Activated naive CD4-positive, alpha-beta T cell treated with anti-CD3 and anti-CD28 coated beads for 36 hours (primary cell): ENCODE measurements at regions of chr2 and their contacts with region 1.

Region 1: DNA sequence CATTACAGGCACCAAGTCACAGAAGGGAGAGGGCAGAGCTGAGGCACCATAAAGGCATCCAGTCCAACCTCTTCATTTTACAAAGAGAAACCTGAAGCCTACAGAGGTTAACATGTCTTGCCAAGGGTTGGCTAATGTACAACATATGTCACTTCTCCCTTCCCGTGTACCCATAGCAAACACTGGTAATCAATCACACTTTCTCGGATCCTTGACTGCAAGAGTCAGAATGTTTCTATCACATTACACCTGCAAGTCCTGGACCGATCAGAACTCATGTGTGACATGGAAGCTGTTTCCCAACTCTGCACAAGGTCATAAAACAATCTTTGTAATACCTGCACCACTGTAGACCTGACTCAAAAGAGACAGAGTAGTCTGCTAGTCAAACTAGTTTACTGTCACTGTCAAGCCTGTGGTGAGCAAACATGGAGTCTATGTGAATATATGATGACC is 6.0 kb downstream of the ANKRD44 start:
- DNase-seq: peak; percentile 68
- H3K4me3 Mint-ChIP-seq: peak overlapping the region; percentile 77
- H3K27ac Mint-ChIP-seq: peak overlapping the region; percentile 96
- H3K4me1 Mint-ChIP-seq: peaks cover 68% of the 10 kb centered on the region
- H3K27me3 Mint-ChIP-seq: no peaks in the 10 kb centered on the region

Region 2: DNA sequence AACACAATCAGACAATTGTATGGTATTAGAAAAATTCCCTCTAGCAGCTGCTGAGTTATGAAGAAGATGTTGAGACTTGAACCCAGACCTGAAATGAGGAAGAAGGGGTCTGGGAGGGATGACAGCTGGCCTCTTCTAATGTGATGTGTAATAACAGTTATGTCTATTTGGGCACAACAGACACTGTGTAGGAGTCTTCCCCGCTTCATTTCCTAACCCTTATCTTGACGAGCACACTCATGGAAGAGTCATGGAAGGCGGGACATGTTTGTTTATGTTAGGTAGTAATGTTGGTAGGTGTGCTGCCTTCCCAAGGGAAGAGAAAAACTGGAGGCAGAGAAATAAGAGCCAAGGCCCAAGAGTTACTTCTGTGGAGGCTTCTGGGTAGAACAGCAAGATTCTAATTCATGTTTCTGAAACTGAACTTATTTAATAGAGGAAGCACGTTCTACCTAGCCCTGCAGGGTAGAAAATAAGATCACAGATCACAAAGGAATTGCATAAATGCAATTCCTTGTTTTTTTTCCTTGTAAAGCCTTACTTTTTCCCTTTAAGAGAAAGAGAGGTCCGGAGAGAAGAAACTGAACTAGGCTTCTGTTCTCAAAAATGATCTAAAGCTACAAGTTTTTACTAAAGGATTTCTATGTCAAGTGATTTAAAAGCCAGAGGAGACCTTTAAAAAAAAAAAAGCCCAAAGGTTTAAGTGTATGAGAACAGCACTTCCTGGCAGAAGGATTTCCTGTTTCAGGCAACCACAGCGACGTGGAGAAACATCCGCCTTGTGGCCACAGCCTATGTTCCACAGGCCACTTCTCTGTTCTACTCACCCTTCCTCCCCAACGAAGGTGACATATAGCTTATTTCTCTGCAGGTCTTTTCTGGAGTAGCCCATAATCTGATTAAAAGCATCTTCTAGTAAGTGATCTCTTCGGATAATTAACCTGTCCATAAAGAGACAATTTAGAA is 1064.7 kb before region 1 on chr2:
- CTCF ChIA-PET with region 1: no interaction called
- intact Hi-C with region 1: loop called (anchors 5 kb)
- DNase-seq: peak; percentile 93
- H3K4me3 Mint-ChIP-seq: peak overlapping the region; percentile 49
- H3K27ac Mint-ChIP-seq: peak overlapping the region; percentile 88
- H3K4me1 Mint-ChIP-seq: peaks cover 85% of the 10 kb centered on the region
- H3K27me3 Mint-ChIP-seq: no peaks in the 10 kb centered on the region

Region 3: GRCh38 chr2:197239434-197239833 is 65.2 kb before region 1 on chr2:
- CTCF ChIA-PET with region 1: interaction called, 4 read pairs
- intact Hi-C with region 1: loop called (anchors 1 kb)
- DNase-seq: no peak
- H3K4me3 Mint-ChIP-seq: peak overlapping the region; percentile 78
- H3K27ac Mint-ChIP-seq: peak overlapping the region; percentile 91
- H3K4me1 Mint-ChIP-seq: peaks cover 85% of the 10 kb centered on the region
- H3K27me3 Mint-ChIP-seq: no peaks in the 10 kb centered on the region

Region 4: GRCh38 chr2:197286805-197287598 is 17.6 kb before region 1 on chr2:
- CTCF ChIA-PET with region 1: interaction called, 20 read pairs
- intact Hi-C with region 1: loop called (anchors 1 kb)
- DNase-seq: peak; percentile 74
- H3K4me3 Mint-ChIP-seq: peak overlapping the region; percentile 64
- H3K27ac Mint-ChIP-seq: peak overlapping the region; percentile 97
- H3K4me1 Mint-ChIP-seq: peaks cover 81% of the 10 kb centered on the region
- H3K27me3 Mint-ChIP-seq: no peaks in the 10 kb centered on the region